Activated CD4-positive, alpha-beta T cell treated with anti-CD3 and anti-CD28 coated beads, Interleukin-2, amount 10 ng/mL, durations not matched to agents 24 days and 14 days (primary cell): ENCODE measurements at regions of chr17 and their contacts with region 1.

Region 1: GRCh38 chr17:8189711-8190477 is at the start of gene BORCS6:
- DNase-seq: peak; percentile 98
- H3K4me3 Mint-ChIP-seq: no peak within 1 kb of the TSS
- H3K27ac Mint-ChIP-seq: peak within 1 kb of the TSS; percentile 92
- H3K4me1 Mint-ChIP-seq: peaks cover 12% of the 10 kb centered on the region
- H3K27me3 Mint-ChIP-seq: no peaks in the 10 kb centered on the region
- total RNA-seq, gene BORCS6: 4.7 and 5.7 TPM in 2 replicates

Region 2: DNA sequence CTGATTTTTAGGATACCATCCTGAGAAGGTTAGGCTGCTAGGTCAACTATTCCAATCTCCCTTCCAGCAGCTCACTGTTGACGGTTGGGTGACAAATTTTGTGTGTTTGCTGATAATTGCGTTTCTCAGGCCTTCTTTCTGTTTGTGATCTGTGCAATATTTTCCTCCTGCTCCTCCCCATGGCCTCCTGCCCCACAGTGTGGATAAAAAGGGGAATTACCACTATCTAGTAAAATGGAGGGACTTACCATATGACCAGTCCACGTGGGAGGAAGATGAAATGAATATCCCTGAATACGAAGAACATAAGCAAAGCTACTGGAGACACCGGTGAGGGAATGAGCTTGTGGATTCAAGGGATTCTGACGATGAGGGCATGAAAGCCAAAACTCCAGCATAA is 292.1 kb before region 1 on chr17:
- intact Hi-C with region 1: no loop called
- DNase-seq: no peak
- H3K4me3 Mint-ChIP-seq: no peak overlapping the region
- H3K27ac Mint-ChIP-seq: peak overlapping the region; percentile 81
- H3K4me1 Mint-ChIP-seq: peaks cover 18% of the 10 kb centered on the region
- H3K27me3 Mint-ChIP-seq: no peaks in the 10 kb centered on the region

Region 3: DNA sequence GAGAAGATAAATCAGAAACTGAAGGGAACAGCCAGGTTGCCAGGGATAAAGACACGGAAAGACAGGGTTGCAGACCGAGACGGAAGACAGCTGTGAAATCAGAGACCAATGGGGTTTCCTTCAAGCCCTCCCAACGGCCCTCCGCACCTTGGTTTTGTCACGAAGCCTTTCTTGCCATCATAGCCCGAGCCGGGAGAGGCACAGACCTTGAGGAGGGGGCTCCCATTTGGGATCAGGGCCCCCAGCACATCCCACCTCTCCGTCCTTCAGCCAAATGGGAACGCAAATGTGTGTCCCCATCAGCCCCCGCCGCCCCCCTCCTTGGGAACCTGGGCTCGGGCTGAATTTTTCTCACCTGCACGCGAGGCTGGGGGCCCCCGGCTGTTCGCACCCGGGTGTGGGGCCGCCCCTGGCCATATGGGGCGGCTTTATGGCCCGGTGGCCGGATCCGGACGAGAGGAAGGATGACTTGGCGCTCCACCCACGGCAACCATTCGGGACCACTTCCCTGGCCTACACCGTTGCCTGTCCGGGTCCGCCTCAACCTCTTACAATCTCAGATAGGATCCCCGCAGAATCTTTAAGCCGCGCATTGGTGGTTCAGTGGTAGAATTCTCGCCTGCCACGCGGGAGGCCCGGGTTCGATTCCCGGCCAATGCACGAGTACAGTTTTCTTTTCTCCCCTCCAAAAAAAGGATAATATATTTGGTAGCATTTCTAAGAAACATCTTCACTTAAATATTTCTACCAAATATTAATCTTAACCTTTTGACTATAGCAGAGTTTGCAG is 64.5 kb before region 1 on chr17:
- intact Hi-C with region 1: no loop called
- DNase-seq: peak; percentile 95
- H3K4me3 Mint-ChIP-seq: peak overlapping the region; percentile 91
- H3K27ac Mint-ChIP-seq: peak overlapping the region; percentile 94
- H3K4me1 Mint-ChIP-seq: peaks cover 50% of the 10 kb centered on the region
- H3K27me3 Mint-ChIP-seq: peaks cover 50% of the 10 kb centered on the region

Region 4: DNA sequence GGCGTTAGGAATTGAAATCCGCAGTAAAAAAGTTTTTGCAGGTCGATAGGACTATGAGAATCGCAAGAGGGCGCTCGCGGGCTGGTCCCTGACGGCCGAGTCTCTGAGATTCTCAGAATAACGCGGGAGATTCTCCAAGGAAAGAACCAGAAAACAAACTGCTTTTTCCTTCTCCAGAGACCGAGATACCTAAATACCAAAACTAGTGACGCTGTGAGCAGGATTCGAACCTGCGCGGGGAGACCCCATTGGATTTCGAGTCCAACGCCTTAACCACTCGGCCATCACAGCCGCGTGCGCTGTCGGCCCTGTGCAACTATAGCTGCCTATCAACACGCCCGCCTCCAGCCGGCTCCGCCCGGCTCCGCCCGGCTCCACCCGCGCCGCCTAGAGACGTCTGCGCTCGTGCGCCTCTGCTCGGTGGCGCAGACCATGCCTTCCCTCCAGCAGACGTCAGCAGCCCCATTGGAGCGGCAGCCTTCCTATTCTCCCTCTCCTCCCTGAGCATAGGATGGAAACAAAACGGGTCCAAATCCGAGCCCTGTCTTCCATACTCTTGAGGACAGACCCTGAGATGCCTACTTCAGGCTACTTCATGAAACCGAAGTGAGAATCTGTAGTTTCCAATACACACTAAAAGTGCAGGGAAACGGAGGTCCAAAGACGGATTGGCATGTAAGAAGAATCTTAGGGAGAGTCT is 51.1 kb before region 1 on chr17:
- intact Hi-C with region 1: loop called (anchors 1 kb)
- DNase-seq: peak; percentile 99
- H3K4me3 Mint-ChIP-seq: no peak overlapping the region
- H3K27ac Mint-ChIP-seq: no peak overlapping the region
- H3K4me1 Mint-ChIP-seq: peaks cover 4% of the 10 kb centered on the region
- H3K27me3 Mint-ChIP-seq: peaks cover 5% of the 10 kb centered on the region

Region 5: GRCh38 chr17:8163978-8164814 is 25.7 kb before region 1 on chr17:
- intact Hi-C with region 1: loop called (anchors 1 kb)
- DNase-seq: peak; percentile 93
- H3K4me3 Mint-ChIP-seq: peak overlapping the region; percentile 92
- H3K27ac Mint-ChIP-seq: peak overlapping the region; percentile 99
- H3K4me1 Mint-ChIP-seq: peaks cover 50% of the 10 kb centered on the region
- H3K27me3 Mint-ChIP-seq: no peaks in the 10 kb centered on the region

Region 6: GRCh38 chr17:8204761-8205555 is 15.1 kb after region 1 on chr17:
- intact Hi-C with region 1: loop called (anchors 1 kb)
- DNase-seq: no peak
- H3K4me3 Mint-ChIP-seq: no peak overlapping the region
- H3K27ac Mint-ChIP-seq: no peak overlapping the region
- H3K4me1 Mint-ChIP-seq: peaks cover 22% of the 10 kb centered on the region
- H3K27me3 Mint-ChIP-seq: no peaks in the 10 kb centered on the region

Region 7: DNA sequence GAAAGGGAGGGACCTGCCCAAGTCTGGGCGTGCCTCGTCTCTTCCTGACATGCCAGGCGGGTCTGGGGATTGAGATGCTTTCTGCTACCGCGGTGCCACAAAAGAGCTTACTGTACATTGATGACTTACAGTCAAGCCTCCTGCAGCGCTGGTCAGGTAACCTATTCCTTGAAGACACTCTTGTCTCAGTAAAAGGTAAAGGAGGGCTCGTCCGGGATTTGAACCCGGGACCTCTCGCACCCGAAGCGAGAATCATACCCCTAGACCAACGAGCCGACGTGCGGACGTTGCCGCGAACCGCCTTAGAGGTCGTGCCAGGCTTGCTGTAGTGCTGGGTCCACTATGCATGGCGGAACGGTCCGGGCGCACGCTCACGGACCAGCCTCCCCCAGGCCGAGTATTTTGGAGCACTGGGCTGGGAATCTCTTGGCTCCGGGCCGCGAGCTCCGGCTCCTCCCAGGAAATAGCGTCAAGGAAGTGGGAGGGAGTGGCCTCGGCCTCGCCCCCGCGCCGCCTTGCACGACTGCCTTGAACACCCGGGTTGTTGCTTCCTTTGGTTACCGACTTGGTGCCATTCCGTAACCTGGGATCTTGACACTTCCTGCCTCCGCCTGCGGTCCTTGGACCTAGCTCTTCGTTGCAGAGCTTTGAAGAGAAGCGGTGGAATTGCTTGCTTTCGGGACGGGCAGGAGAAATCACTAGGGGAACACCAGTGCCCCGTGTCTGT is 32.9 kb after region 1 on chr17:
- intact Hi-C with region 1: loop called (anchors 1 kb)
- DNase-seq: peak; percentile 96
- H3K4me3 Mint-ChIP-seq: peak overlapping the region; percentile 98
- H3K27ac Mint-ChIP-seq: peak overlapping the region; percentile 93
- H3K4me1 Mint-ChIP-seq: peaks cover 60% of the 10 kb centered on the region
- H3K27me3 Mint-ChIP-seq: peaks cover 7% of the 10 kb centered on the region